ENCODE measurements at regions of chr3 and their contacts with region 1.

Region 1: DNA sequence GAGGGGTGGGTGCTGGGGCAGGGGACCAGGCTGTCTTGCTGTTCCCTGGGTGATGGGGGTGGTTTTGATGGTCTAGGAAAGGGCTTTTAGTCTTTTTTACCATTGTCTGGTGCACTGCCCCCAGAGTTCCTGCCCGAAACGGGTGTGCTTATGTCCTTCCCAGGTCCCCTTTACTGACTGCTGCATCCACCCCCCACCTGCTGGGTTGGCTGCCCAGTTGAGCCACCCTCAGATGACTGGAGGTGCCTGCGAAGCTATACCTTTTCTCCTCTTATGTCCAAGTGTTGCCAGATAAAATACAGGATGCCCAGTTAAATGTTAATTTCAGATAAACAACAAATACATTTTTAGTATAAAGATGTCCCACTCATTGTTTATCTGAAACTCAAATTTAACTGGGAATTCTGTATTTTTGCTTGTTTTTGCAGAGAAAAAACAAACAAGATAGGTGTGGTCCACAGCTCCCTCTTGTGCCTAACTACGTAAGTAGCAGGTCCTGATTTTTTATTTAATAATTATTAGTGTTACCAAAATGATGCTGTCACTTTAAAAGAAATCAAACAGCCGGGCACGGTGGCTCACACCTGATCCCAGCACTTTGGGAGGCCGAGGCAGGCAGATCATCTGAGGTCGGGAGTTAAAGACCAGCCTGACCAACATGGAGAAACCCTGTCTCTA is 6.1 kb upstream of the RPP14 start:
- DNase-seq: peak in 1 of 7 donors; percentile 28
- H3K4me3 ChIP-seq: no peak overlapping the region
- H3K27ac ChIP-seq: no peak overlapping the region
- H3K4me1 ChIP-seq: no peaks in the 10 kb centered on the region
- H3K27me3 ChIP-seq: no peaks in the 10 kb centered on the region
- CTCF ChIP-seq: peak; percentile 48 to 80 (median 72)
- POLR2A ChIP-seq: no peak

Region 2: DNA sequence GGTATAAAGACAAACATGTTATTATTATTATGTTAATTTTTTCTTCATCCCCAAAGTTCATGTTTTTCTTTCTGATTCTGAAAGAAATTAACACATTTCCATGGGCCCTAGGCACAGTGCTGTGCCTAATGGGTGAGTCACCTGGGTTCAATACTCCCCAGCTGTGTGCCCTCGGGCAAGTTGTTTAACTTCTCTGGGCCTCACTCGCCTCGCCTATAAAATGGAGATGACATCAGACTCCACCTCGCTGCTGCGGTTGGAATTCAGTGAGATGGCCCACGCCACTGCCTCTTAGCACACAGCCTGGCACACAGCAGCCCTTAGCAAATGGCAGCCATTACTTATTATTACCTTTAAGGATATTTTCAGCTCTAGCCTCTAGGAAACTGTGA is 111.8 kb before region 1 on chr3:
- intact Hi-C with region 1: loop called (anchors 2 kb)
- DNase-seq: no peak
- H3K4me3 ChIP-seq: no peak overlapping the region
- H3K27ac ChIP-seq: no peak overlapping the region
- H3K4me1 ChIP-seq: no peaks in the 10 kb centered on the region
- H3K27me3 ChIP-seq: no peaks in the 10 kb centered on the region
- CTCF ChIP-seq: no peak
- POLR2A ChIP-seq: no peak

Region 3: DNA sequence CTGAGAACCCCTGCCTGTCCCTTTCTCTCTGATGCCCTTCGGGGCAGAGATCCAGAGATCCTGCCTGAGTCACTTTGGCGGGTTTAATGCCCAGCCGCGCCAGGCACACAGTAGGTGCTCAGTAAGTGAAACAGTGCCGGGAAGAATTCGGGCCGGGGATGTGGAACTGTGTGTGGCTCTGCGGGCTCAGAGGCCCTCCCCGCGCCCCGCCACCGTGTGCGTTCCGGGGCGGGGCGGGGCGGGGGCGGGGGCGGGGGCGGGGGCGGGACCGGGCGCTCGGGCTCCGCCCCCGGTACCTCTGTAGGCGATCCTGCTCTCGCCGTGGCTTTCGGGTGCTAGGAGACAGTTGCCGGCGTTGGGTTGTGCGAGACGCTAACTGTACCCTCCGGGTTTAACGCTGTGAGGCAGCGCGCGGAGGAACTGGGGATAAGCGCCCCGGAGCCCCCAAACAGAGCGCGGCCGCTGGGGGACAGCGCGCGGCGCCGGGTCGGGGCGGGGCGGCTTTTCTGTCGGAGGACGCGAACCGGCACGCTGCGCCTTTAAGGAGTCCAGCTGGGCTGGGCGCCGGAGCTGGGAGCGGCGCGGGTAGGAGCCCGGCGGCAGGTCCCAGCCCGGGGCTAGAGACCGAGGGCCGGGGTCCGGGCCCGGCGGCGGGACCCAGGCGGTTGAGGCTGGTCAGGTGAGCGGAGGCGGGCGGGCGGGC is 62.6 kb before region 1 on chr3 and contains the start of gene ABHD6:
- intact Hi-C with region 1: loop called (anchors 5 to 10 kb)
- DNase-seq: peak; percentile 69 to 83 (median 77)
- H3K4me3 ChIP-seq: peak within 1 kb of the TSS; percentile 72 to 89 (median 76)
- H3K27ac ChIP-seq: peak within 1 kb of the TSS in 4 of 5 donors; percentile 68 to 90 (median 76)
- H3K4me1 ChIP-seq: peaks cover 8 to 31% of the 10 kb centered on the region in 2 donors
- H3K27me3 ChIP-seq: no peaks in the 10 kb centered on the region
- CTCF ChIP-seq: peak in 1 of 6 experiments; percentile 32
- POLR2A ChIP-seq: peak; percentile 20 to 53
- total RNA-seq, gene ABHD6: 17.2 to 57.3 (median 28.1) TPM

Region 4: DNA sequence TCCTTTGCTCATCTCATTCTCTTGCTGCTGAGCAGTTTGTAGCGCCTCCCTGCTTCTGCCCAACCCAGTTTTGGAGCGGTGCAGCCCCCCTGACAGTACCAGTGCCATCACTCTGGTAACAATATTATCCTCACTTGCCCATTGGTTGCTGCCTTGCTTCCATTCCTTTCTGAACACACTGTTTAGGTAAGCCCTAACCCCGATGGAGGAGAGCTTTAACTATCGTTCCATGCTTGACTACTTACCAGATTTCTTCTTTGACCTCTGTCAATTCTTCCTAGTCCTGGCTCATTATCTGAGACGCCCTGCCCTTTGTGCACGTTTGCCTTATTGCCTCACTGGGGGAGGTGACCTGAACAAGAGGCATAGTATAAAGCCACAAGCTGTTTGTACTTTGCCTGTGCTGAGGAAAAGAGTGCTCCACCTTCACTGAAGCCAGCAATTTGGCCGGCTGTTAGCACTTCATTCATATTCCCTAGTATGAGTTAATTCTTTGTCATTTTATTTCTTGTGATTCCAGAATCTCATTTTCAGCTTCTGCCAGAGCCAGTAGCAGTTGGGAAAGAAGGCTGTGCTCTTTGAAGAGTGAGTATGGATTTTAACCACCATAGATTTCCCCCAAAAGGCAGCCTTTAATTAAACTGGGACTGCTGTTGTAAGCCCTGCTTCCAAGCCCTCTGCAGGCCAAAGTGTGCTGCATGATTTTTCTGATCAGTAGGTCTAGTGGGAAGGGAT is 50.5 kb before region 1 on chr3:
- intact Hi-C with region 1: loop called in 1 of 2 experiments (anchors 10 kb)
- DNase-seq: no peak
- H3K4me3 ChIP-seq: no peak overlapping the region
- H3K27ac ChIP-seq: peak overlapping the region in 1 of 5 donors; percentile 31
- H3K4me1 ChIP-seq: peaks cover 0 to 13% of the 10 kb centered on the region in 2 donors
- H3K27me3 ChIP-seq: no peaks in the 10 kb centered on the region
- CTCF ChIP-seq: peak in 1 of 6 experiments; percentile 11
- POLR2A ChIP-seq: no peak

Region 5: DNA sequence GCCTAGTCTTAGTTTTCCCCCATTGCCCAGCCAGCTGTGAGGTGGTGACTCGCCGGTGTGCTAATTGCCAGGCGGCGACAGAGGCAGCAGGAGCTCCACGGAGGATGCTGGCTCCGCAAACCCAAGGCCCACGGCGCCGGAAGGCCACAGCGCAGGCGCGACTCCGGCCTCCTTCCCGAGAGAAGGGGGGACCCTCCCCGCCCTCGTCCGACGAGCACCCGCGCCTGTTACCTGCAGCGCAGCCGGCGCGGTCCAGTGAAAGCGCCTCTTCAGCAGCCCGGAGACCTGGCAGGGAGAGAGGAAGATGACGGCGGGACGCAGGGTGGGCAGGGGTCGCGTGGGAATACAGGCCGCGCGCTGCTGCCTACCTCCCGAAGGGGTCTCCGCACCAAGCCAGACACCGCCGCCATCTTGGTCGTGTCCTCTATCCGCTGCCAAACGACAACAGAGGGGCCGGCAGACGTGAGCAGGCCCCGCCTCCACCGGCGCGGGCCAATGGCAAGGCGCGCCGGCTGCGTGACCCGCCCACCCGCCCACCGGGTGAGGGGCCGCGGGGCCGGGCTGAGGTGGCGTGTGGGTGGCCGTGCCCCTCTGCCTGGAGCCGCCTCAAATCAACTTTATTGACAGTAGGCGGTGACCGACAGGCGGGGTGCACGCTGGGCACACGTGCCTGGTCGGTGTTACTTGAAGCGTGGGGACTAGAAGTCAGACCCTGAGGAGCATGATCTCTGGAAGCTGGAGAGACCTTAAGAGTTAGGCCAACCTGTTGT is 133.6 kb after region 1 on chr3 and contains the start of gene PDHB:
- intact Hi-C with region 1: no loop called
- DNase-seq: peak; percentile 93 to 96 (median 95)
- H3K4me3 ChIP-seq: peak within 1 kb of the TSS; percentile 71 to 99 (median 88)
- H3K27ac ChIP-seq: peak within 1 kb of the TSS in 4 of 5 donors; percentile 76 to 91 (median 86)
- H3K4me1 ChIP-seq: peaks cover 13 to 18% of the 10 kb centered on the region in 2 donors
- H3K27me3 ChIP-seq: no peaks in the 10 kb centered on the region
- CTCF ChIP-seq: peak in 1 of 6 experiments; percentile 1
- POLR2A ChIP-seq: peak; percentile 72 to 85
- total RNA-seq, gene PDHB: 84.2 to 264 (median 107) TPM

Measured in adrenal gland (tissue), 19 donors.